Naive thymus-derived CD4-positive, alpha-beta T cell (primary cell): ENCODE measurements at regions of chr2 and their contacts with region 1.

Region 1: GRCh38 chr2:170873035-170873692 is 55.9 kb upstream of the GORASP2 start:
- DNase-seq: peak; percentile 41 to 75 (median 61)
- ATAC-seq: peak; percentile 86
- H3K4me3 ChIP-seq: peak overlapping the region; percentile 27
- H3K4me3 Mint-ChIP-seq: peak overlapping the region; percentile 26 to 86 (median 74)
- H3K27ac ChIP-seq: no peak overlapping the region
- H3K27ac Mint-ChIP-seq: peak overlapping the region in 7 of 9 donors; percentile 12 to 70 (median 35)
- H3K4me1 ChIP-seq: peaks cover 2 to 8% of the 10 kb centered on the region in 2 donors
- H3K4me1 Mint-ChIP-seq: peaks cover 9 to 21% (median 17%) of the 10 kb centered on the region in 7 donors
- H3K27me3 ChIP-seq: no peaks in the 10 kb centered on the region
- H3K27me3 Mint-ChIP-seq: peaks cover 0 to 12% (median 8%) of the 10 kb centered on the region in 5 donors

Region 2: GRCh38 chr2:170235860-170236679 is 637.1 kb before region 1 on chr2:
- CTCF ChIA-PET with region 1: no interaction called
- POLR2A ChIA-PET with region 1: no interaction called
- intact Hi-C with region 1: loop called in 1 of 2 experiments (anchors 2 kb)
- DNase-seq: peak in 2 of 9 donors; percentile 0 to 2
- ATAC-seq: no peak
- H3K4me3 ChIP-seq: no peak overlapping the region
- H3K4me3 Mint-ChIP-seq: no peak overlapping the region
- H3K27ac ChIP-seq: no peak overlapping the region
- H3K27ac Mint-ChIP-seq: no peak overlapping the region
- H3K4me1 ChIP-seq: no peaks in the 10 kb centered on the region
- H3K4me1 Mint-ChIP-seq: no peaks in the 10 kb centered on the region
- H3K27me3 ChIP-seq: no peaks in the 10 kb centered on the region
- H3K27me3 Mint-ChIP-seq: peaks cover 18 to 32% (median 29%) of the 10 kb centered on the region in 5 donors

Region 3: DNA sequence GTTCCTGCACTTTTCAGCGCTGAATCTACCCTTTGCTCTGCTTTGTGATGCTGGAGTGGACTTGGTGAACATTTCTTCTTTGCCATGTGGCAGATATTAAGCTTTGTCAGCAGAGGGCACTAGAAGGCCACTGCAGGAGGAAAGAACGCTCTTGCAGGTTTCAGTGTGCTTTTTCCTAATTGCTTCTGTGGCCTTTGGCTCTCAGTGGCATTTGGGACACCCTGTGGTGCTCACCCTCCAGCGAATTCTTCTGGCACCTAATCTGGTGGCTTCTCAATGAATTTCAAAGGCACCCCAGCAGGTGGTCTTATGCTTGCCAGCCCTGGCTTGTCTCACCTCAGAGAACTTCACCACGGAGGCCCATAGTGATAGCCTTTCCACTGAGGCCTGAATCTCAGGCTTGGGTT is 548.5 kb before region 1 on chr2:
- CTCF ChIA-PET with region 1: interaction called, 3 read pairs
- POLR2A ChIA-PET with region 1: no interaction called
- intact Hi-C with region 1: loop called in 1 of 2 experiments (anchors 1 kb)
- DNase-seq: peak in 8 of 9 donors; percentile 5 to 57 (median 34)
- ATAC-seq: peak; percentile 31
- H3K4me3 ChIP-seq: no peak overlapping the region
- H3K4me3 Mint-ChIP-seq: no peak overlapping the region
- H3K27ac ChIP-seq: no peak overlapping the region
- H3K27ac Mint-ChIP-seq: no peak overlapping the region
- H3K4me1 ChIP-seq: no peaks in the 10 kb centered on the region
- H3K4me1 Mint-ChIP-seq: peaks cover 0 to 2% (median 0%) of the 10 kb centered on the region in 7 donors
- H3K27me3 ChIP-seq: no peaks in the 10 kb centered on the region
- H3K27me3 Mint-ChIP-seq: peaks cover 0 to 7% (median 3%) of the 10 kb centered on the region in 5 donors

Region 4: DNA sequence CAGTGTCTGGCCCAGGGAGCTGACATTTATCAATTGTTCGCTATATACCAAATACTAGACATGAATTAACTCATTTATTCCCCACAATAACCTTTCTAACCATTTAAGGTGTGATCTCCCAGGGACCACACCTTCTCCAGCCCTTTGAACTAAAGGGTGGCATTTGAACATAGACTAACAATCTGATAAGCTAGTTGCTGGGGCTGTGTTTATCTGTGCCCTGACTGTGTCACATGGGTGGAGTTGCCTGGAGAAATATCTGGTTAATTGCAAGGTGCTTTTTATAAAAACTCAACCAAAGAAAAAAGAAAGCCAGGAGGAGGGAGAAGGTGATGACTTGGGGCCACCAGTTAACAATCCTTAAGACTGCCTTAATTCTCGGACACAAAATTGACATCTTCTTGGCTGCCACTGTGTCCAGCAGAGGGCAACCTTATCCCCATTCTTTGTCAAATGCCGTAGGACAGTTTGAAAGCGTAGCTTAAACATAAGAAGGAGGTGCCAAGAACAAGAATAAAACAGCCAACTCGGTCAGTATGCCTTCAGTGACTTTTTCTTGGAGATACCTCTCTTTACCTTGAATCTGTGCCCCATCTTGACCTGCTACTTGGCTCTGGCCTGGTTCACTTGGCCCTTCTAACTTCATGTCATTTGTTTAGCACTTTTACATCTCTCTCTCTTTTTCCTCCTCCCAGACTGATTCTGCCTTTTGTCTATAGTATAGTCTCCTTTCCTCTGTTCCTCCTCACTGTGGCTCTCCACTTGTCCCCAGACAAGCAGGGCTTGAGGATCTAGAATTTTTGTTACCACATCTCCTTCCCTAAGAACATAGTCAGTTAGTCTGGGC is 511.9 kb before region 1 on chr2:
- CTCF ChIA-PET with region 1: interaction called, 3 read pairs
- POLR2A ChIA-PET with region 1: no interaction called
- intact Hi-C with region 1: loop called (anchors 1 to 5 kb)
- DNase-seq: peak; percentile 10 to 58 (median 46)
- ATAC-seq: peak; percentile 84
- H3K4me3 ChIP-seq: no peak overlapping the region
- H3K4me3 Mint-ChIP-seq: peak overlapping the region in 3 of 10 donors; percentile 0 to 56 (median 4)
- H3K27ac ChIP-seq: no peak overlapping the region
- H3K27ac Mint-ChIP-seq: peak overlapping the region in 2 of 9 donors; percentile 9 to 75
- H3K4me1 ChIP-seq: peaks cover 0 to 6% of the 10 kb centered on the region in 2 donors
- H3K4me1 Mint-ChIP-seq: peaks cover 3 to 48% (median 8%) of the 10 kb centered on the region in 7 donors
- H3K27me3 ChIP-seq: no peaks in the 10 kb centered on the region
- H3K27me3 Mint-ChIP-seq: peaks cover 0 to 23% (median 11%) of the 10 kb centered on the region in 5 donors

Region 5: GRCh38 chr2:170409164-170409535 is 464.0 kb before region 1 on chr2:
- CTCF ChIA-PET with region 1: interaction called, 3 read pairs
- POLR2A ChIA-PET with region 1: no interaction called
- intact Hi-C with region 1: loop called in 1 of 2 experiments (anchors 1 kb)
- DNase-seq: peak; percentile 46 to 80 (median 69)
- ATAC-seq: peak; percentile 86
- H3K4me3 ChIP-seq: no peak overlapping the region
- H3K4me3 Mint-ChIP-seq: peak overlapping the region in 8 of 10 donors; percentile 61 to 80 (median 64)
- H3K27ac ChIP-seq: no peak overlapping the region
- H3K27ac Mint-ChIP-seq: peak overlapping the region in 2 of 9 donors; percentile 43 to 44
- H3K4me1 ChIP-seq: peaks cover 0 to 6% of the 10 kb centered on the region in 2 donors
- H3K4me1 Mint-ChIP-seq: peaks cover 5 to 15% (median 11%) of the 10 kb centered on the region in 7 donors
- H3K27me3 ChIP-seq: no peaks in the 10 kb centered on the region
- H3K27me3 Mint-ChIP-seq: peaks cover 24 to 32% (median 32%) of the 10 kb centered on the region in 5 donors

Region 6: GRCh38 chr2:170822290-170823087 is 50.7 kb before region 1 on chr2:
- CTCF ChIA-PET with region 1: interaction called, 3 read pairs
- POLR2A ChIA-PET with region 1: no interaction called
- intact Hi-C with region 1: loop called in 1 of 2 experiments (anchors 2 kb)
- DNase-seq: peak in 4 of 9 donors; percentile 22 to 52 (median 35)
- ATAC-seq: peak; percentile 43
- H3K4me3 ChIP-seq: peak overlapping the region; percentile 57
- H3K4me3 Mint-ChIP-seq: peak overlapping the region; percentile 54 to 94 (median 81)
- H3K27ac ChIP-seq: no peak overlapping the region
- H3K27ac Mint-ChIP-seq: peak overlapping the region in 1 of 9 donors; percentile 14
- H3K4me1 ChIP-seq: peaks cover 35 to 47% of the 10 kb centered on the region in 2 donors
- H3K4me1 Mint-ChIP-seq: peaks cover 25 to 63% (median 47%) of the 10 kb centered on the region in 7 donors
- H3K27me3 ChIP-seq: peaks cover 21 to 33% of the 10 kb centered on the region in 2 donors
- H3K27me3 Mint-ChIP-seq: peaks cover 82 to 89% (median 88%) of the 10 kb centered on the region in 5 donors

Region 7: GRCh38 chr2:171225302-171225980 is 352.3 kb after region 1 on chr2:
- CTCF ChIA-PET with region 1: no interaction called
- POLR2A ChIA-PET with region 1: no interaction called
- intact Hi-C with region 1: no loop called
- DNase-seq: no peak
- ATAC-seq: no peak
- H3K4me3 ChIP-seq: no peak overlapping the region
- H3K4me3 Mint-ChIP-seq: no peak overlapping the region
- H3K27ac ChIP-seq: no peak overlapping the region
- H3K27ac Mint-ChIP-seq: no peak overlapping the region
- H3K4me1 ChIP-seq: no peaks in the 10 kb centered on the region
- H3K4me1 Mint-ChIP-seq: peaks cover 0 to 2% (median 0%) of the 10 kb centered on the region in 7 donors
- H3K27me3 ChIP-seq: no peaks in the 10 kb centered on the region
- H3K27me3 Mint-ChIP-seq: no peaks in the 10 kb centered on the region